A549 (cell line): ENCODE measurements at regions of chr2 and their contacts with region 1.

Region 1: DNA sequence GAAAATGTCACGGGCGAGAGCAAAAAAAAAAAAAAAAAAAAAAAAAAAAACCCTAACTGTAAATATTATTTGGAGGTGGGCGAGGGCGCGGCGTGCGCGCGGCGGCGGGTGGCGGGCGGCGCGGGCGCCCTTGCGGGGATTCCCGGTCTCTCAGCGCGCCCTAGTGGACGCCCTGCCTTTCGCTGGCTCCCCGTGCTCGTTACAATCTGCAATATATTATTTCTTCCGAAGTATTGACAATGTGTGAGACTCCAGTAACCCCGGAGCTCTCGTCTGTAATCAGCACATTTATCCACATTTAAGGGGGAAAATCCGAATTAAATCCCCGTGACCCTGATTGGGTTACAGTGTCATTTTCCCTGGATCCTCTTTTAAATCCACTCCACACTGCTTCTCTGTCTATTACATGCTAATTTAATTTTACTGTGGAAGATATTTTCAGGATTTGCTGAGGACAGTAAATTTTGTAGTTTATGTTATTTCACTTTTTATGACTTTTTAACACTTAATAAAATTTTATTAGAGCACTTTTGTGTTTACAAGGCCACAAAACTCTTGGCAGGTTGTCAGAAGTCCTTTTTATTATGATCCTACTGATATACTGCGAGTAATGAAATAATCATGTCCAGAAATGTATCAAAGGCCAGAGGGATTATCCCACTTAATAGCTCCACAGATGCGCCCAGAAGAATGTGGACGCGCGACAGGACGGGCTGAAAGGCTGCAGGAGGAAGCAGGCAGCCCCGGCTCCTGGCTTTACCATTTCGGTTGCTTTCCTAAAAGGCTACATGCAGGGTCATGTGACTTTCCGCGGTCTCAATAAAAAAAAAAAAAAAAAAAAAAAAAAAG is 369.1 kb downstream of the MTX2 start:
- DNase-seq: peak; percentile 68 to 69
- ATAC-seq: peak; percentile 92 to 96
- H3K4me3 ChIP-seq: peak overlapping the region; percentile 66
- H3K27ac ChIP-seq: peak overlapping the region; percentile 88 to 95
- H3K4me1 ChIP-seq: peaks cover 11% of the 10 kb centered on the region; the same call in 2 of the 3 replicates
- CTCF ChIP-seq: peak; percentile 96
- EP300 ChIP-seq: no peak
- POLR2A ChIP-seq: no peak
- RAD21 ChIP-seq: peak; percentile 87 to 98

Region 2: DNA sequence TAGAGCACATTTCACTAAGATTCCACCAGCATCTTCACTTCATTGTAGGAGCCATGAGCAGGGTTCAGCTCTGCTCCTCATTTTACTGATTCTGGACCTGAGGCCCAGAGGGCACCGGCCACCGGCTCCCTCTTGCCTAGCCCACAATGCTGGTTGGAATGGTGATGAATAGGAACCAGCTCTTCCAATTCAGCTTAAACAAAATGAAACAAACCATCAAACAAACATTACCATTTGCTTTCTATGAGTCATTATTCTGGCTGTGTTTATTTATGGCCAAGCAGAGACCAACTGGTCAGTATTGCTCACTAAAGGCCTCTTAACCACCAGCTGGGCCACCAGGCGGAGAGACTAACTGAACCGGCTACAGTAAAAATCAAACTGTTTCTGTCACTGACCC is 192.4 kb before region 1 on chr2:
- CTCF ChIA-PET with region 1: interaction called, 19 read pairs
- POLR2A ChIA-PET with region 1: no interaction called
- DNase-seq: peak in 1 of 2 experiments; percentile 14
- ATAC-seq: peak; percentile 50 to 61; a peak in 4 of 6 replicates
- H3K4me3 ChIP-seq: no peak overlapping the region
- H3K27ac ChIP-seq: no peak overlapping the region
- H3K4me1 ChIP-seq: peaks cover 16% of the 10 kb centered on the region
- CTCF ChIP-seq: no peak
- EP300 ChIP-seq: no peak
- POLR2A ChIP-seq: no peak
- RAD21 ChIP-seq: no peak

Region 3: GRCh38 chr2:176554101-176555048 is 84.0 kb before region 1 on chr2:
- CTCF ChIA-PET with region 1: interaction called, 14 read pairs
- POLR2A ChIA-PET with region 1: interaction called, 9 read pairs
- DNase-seq: peak; percentile 61 to 69
- ATAC-seq: peak; percentile 77 to 79
- H3K4me3 ChIP-seq: peak overlapping the region; percentile 46
- H3K27ac ChIP-seq: peak overlapping the region; percentile 77 to 90
- H3K4me1 ChIP-seq: no peaks in the 10 kb centered on the region
- CTCF ChIP-seq: peak; percentile 84
- EP300 ChIP-seq: no peak
- POLR2A ChIP-seq: no peak
- RAD21 ChIP-seq: peak; percentile 79 to 81

Region 4: GRCh38 chr2:176613323-176613987 is 24.9 kb before region 1 on chr2:
- CTCF ChIA-PET with region 1: interaction called, 11 read pairs
- POLR2A ChIA-PET with region 1: no interaction called
- DNase-seq: no peak
- ATAC-seq: no peak
- H3K4me3 ChIP-seq: no peak overlapping the region
- H3K27ac ChIP-seq: no peak overlapping the region
- H3K4me1 ChIP-seq: peaks cover 16% of the 10 kb centered on the region
- CTCF ChIP-seq: no peak
- EP300 ChIP-seq: no peak
- POLR2A ChIP-seq: no peak
- RAD21 ChIP-seq: no peak

Region 5: DNA sequence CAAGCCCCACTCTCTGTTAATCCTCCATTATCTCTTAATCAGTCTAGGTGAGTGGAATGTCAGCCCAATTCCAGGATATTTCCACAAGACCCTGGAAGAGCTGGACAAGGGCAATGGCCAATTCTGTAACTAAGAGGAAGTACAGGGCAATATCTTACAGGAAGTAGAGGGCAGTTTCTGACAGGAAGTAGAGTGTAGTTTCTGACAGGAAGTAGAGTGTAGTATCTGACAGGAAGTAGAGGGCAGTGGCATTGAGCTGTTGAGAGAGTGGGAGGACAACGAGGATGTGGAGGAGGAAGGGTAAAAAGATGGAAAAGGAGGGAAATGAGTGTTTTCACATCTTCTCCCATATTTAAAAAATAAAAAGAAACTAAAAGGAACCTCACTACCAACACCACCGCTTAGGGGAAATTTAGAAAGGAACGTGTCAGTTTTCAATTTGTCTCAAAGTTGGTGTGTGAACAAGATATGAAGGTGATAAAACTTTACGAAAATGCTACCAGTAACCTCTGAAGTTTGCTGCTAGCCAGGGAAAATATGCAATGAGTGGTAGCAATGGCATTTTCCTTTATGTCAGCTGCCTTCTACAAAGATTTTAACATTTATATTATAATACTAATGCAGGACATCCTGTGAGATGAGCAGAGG is 143.3 kb after region 1 on chr2:
- CTCF ChIA-PET with region 1: no interaction called
- POLR2A ChIA-PET with region 1: no interaction called
- DNase-seq: no peak
- ATAC-seq: no peak
- H3K4me3 ChIP-seq: no peak overlapping the region
- H3K27ac ChIP-seq: no peak overlapping the region
- H3K4me1 ChIP-seq: no peaks in the 10 kb centered on the region
- CTCF ChIP-seq: no peak
- EP300 ChIP-seq: no peak
- POLR2A ChIP-seq: no peak
- RAD21 ChIP-seq: no peak